AG04449 (cell line): ENCODE measurements at regions of chr14 and their contacts with region 1.

Region 1: GRCh38 chr14:89040460-89041259 is 216.2 kb downstream of the TTC8 start:
- DNase-seq: peak; percentile 54
- H3K4me3 ChIP-seq: peak overlapping the region; percentile 58
- CTCF ChIP-seq: peak; percentile 94

Region 2: DNA sequence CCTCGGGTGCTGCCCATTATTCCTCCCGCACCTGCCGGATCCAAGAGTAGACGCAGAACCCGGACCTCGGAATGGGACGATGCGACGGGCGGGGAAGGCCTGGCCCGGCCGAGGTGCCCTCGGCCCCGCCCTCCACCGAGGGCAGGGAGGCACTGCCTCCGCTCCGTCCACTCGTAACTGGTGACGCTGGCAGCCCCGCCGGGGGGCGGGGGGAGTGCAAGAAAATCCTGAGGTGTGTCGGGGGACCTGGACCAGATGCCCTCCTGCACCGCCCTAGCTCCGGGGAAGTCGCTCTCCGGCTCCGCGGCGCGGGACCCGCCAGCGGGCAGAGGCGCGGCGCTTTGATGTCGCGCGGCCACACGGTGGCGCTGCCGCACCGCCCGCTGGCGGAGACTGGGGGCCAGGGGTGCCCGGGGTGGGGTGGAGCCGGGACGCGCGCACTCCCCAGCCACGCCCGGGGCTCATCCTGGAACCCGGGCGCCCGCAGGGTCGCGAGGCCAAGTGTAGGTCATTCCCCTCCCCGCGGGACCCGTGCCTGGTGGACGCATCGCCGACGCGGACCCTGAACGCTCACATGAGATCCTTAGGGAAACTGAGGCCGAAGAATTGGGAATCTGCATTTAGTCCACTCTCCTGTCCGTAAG is 13.4 kb before region 1 on chr14:
- CTCF ChIA-PET with region 1: interaction called, 62 read pairs
- POLR2A ChIA-PET with region 1: no interaction called
- DNase-seq: no peak
- H3K4me3 ChIP-seq: peak overlapping the region; percentile 69
- CTCF ChIP-seq: peak; percentile 71

Region 3: DNA sequence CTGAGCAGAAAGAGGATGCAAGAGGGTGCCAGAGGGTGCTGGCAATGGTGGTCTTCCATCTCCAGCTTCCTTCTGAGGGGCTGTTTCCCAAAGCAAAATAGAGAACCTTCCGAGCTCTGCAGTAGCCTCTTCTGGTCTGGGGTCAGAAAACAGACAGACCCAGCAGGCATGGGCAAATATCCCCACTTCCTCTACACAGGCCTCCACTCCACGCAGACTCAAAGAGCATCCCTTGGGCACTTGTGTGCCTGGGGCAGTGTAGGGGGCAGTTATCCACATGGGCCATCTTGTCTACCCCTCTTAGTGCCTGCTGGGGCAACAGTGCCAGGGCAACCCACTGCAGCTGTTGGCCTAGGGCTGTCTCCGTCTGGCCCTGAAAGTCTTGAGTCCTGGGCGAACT is 15.7 kb after region 1 on chr14:
- CTCF ChIA-PET with region 1: interaction called, 11 read pairs
- POLR2A ChIA-PET with region 1: no interaction called
- DNase-seq: no peak
- H3K4me3 ChIP-seq: no peak overlapping the region
- CTCF ChIP-seq: no peak

Region 4: DNA sequence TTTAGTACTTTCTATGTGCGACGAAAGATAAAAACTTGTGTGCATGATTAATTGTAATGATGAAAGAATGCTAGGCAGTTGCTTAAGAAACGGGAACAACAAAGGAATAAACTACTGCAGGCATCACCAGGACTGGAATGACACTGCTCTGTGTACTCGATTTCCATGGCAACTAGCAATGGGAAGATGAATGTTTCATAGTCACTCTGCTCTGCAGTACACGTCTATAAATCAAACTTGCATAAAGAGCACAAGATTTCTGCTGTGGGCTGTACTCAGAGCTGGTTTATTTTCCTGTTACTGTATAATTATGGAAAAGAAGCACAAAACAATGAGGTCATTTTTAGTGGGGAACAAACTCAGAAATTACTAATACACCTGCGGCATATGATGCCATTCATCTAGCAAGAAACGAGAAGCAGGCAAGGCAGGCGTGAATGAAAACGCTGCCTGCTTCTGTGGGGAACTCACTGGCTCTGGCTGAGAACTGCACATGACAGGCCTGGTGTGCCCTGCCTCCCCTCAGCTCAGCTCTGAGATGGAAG is 872.1 kb after region 1 on chr14:
- CTCF ChIA-PET with region 1: interaction called, 14 read pairs
- POLR2A ChIA-PET with region 1: no interaction called
- DNase-seq: peak; percentile 96
- H3K4me3 ChIP-seq: no peak overlapping the region
- CTCF ChIP-seq: no peak

Region 5: GRCh38 chr14:89936658-89937185 is 896.1 kb after region 1 on chr14:
- CTCF ChIA-PET with region 1: interaction called, 11 read pairs
- POLR2A ChIA-PET with region 1: no interaction called
- DNase-seq: no peak
- H3K4me3 ChIP-seq: no peak overlapping the region
- CTCF ChIP-seq: no peak